ENCODE measurements at regions of chr3 and their contacts with region 1.

Region 1: DNA sequence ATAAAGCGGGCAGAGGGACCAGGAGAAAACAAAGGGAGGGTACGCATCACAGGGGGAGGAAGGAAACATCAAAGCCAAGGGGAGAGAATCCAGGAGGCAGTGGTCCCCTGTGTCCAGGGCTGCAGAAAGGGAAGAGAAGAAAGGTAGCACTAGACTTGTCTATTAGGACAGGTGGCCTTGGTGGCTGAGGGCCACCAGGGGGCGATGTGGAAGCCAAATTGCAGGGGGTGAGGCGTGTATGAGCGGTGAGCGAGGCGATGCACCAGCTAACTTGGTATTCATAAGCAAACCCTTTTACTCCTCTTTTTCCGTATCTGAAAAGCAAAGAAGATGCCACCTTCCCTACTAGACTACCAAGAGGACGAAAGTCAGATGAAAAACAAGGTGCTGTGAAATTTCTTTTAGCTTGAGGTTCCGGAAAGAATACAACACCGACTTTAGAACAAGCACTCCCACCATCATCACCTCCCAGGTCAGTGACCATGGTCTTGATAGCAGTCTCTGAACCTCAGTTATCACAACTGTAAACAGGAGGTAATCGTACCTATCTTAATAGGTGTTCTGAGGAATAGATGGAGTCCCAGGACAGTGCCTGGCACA is 654.4 kb upstream of the ADAMTS9 start:
- DNase-seq: no peak
- H3K4me3 ChIP-seq: no peak overlapping the region
- H3K27ac ChIP-seq: no peak overlapping the region
- H3K27me3 ChIP-seq: peaks cover 4% of the 10 kb centered on the region
- CTCF ChIP-seq: peak; percentile 78

Region 2: DNA sequence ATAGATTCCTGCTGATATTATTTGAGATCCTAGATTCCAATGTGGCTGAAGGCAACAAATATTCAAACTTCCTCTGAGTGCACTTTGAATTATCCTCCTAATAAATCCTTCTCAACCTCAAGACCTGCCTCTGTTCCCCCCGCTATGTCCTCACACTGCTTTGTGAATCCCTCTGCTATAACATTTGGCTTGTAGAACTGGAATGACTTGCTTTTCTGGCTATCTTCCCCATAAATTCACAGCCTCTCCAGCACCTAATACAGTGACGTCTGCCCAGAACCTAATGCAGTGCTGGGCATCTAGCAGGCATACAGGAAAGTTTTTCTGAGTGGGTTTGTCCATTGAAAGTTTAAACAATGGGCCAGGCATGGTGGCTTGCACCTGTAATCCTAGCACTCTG is 10.5 kb before region 1 on chr3:
- CTCF ChIA-PET with region 1: interaction called, 13 read pairs
- POLR2A ChIA-PET with region 1: no interaction called
- DNase-seq: no peak
- H3K4me3 ChIP-seq: no peak overlapping the region
- H3K27ac ChIP-seq: no peak overlapping the region
- H3K27me3 ChIP-seq: peaks cover 16% of the 10 kb centered on the region
- CTCF ChIP-seq: no peak